ENCODE measurements at regions of chr3 and their contacts with region 1.

Region 1: DNA sequence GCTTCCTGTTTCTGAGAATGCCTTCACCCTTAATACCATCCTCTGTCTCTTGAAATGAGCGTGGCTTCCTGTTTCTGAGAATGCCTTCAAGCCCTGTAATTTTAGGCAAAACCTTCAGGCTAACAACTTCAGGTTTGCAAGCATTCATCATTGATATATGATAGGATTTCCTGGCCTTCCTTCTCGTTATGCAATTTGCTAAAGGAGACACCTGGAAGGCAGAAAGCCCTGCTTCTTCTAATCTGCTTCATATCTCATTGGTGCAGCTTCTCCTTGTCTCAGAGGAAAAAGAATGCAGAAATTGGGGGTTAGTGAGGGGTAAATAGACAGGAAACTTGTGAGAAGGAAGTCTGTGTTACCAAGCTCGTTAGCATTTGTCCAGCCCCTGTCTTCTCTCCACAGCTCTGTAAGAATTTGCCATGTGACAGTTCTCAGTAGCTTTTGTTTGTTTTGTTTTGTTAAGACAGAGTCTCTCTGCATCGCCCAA is 7.3 kb downstream of the ARL6IP5 start:
- DNase-seq: peak; percentile 55
- ATAC-seq: peak; percentile 70
- H3K4me3 Mint-ChIP-seq: peak overlapping the region; percentile 81
- H3K27ac Mint-ChIP-seq: peak overlapping the region; percentile 88
- H3K4me1 Mint-ChIP-seq: peaks cover 84% of the 10 kb centered on the region
- H3K27me3 Mint-ChIP-seq: no peaks in the 10 kb centered on the region

Region 2: DNA sequence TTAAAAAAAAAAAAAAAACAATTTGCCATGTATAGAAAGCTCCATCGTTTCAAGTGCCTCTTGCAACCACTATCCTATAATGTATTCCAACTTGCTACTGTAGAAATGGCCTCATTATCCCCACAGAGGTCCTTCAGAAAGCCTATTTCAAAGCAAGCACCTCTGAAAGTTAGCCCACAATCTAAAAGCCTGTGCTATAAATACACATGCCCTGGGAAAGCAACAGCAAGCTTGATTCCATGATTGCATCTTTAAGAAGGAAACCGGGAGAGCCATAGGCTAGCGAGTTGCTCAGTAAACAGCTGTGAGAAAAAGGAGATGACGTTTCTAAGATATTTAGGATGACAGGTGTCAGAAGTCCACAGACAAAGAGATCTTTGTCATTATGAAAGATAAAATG is 188.0 kb before region 1 on chr3:
- CTCF ChIA-PET with region 1: no interaction called
- POLR2A ChIA-PET with region 1: no interaction called
- DNase-seq: no peak
- ATAC-seq: no peak
- H3K4me3 Mint-ChIP-seq: no peak overlapping the region
- H3K27ac Mint-ChIP-seq: no peak overlapping the region
- H3K4me1 Mint-ChIP-seq: no peaks in the 10 kb centered on the region
- H3K27me3 Mint-ChIP-seq: peaks cover 12% of the 10 kb centered on the region

Region 3: DNA sequence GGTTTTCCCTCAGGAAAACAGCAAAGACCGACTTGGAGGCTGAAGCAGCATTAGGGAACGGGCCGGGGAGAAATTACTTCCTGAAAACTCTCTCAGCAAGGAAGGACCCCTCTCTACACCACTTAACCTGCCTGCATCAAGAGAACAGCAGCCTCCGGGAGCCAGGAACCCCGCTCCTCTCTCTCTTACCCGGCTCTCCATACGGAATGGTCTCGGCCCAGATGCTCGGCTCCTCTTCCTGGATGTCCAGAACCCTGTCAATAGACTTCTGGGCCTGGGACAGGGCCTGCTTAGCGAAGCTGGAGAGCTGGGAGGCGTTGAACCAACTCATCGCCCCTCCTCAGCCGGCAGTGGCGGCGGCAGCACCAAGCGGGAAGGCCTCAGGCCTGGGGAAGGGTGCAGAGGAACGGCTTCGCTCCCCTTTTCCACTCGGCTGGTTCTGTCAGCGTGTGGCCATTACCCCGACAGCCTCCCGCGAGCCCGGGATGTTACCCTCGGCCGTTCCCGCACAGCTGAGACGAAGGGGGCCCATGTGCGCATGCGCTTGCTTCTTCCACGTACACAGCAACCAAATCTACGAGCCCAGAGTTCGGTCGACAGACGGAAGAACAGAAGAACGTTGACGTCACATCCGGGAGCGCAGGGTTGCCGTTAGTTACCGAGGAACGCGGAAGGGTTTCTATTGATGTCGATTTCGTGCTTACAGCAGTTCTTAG is 40.2 kb before region 1 on chr3 and contains the start of gene TMF1:
- CTCF ChIA-PET with region 1: interaction called, 20 read pairs
- POLR2A ChIA-PET with region 1: interaction called, 83 read pairs
- DNase-seq: peak; percentile 99
- ATAC-seq: peak; percentile 92
- H3K4me3 Mint-ChIP-seq: peak within 1 kb of the TSS; percentile 90
- H3K27ac Mint-ChIP-seq: peak within 1 kb of the TSS; percentile 91
- H3K4me1 Mint-ChIP-seq: peaks cover 51% of the 10 kb centered on the region
- H3K27me3 Mint-ChIP-seq: no peaks in the 10 kb centered on the region
- total RNA-seq, gene TMF1: 47.5 to 49.3 TPM

Measured in activated CD8-positive, alpha-beta T cell treated with anti-CD3 and anti-CD28 coated beads, Interleukin-2, amount 10 ng/mL, durations not matched to agents 7 days and 5 days (primary cell).